Panc1 (cell line): ENCODE measurements at regions of chr5 and their contacts with region 1.

Region 1: DNA sequence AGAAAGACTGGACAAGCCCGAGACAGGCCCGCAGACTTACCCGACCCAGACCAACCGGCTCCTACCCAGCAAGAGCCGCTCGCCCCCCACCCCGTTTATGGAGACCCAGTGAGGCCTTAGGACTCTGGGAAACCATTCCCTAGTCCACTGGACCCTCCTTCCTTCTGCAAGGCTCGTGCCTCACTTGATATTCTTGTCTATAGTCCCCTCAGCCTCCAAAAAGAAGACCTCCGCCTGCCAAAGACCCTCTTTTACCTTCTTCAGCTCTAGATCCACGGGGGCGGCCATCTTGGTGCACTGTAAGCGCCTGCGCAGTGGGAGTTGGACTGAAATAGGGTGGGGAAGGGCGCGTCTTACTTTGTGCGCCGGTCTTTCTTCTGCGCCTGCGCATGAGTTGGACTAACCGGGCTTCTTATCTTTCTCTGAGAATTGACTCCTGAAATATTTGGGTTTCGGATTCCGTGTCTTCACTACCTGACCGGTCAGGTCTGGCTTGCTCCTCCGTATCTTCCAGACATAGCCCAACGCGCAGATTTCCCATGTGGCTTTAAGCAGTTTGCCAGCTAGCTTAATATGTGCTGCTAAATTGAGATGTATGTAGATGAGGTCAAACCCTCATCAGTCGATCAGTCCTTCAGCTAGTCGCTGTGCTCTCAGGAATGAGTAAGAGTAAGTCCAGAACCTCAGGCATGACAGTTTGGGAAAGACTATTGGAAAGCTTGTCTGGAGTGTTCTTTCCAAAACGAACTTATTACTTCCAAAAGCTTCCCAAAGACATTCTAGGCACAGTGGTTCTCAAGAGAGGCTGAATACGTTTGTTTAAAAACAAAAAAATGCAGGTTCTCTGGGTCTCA is at the start of gene PFDN1:
- DNase-seq: peak; percentile 86
- ATAC-seq: peak; percentile 98
- H3K4me3 ChIP-seq: peak within 1 kb of the TSS; percentile 91 to 98
- H3K27ac ChIP-seq: peak within 1 kb of the TSS; percentile 97
- H3K4me1 ChIP-seq: peaks cover 26% of the 10 kb centered on the region
- H3K27me3 ChIP-seq: no peaks in the 10 kb centered on the region
- CTCF ChIP-seq: no peak
- total RNA-seq, gene PFDN1: 54.4 TPM

Region 2: DNA sequence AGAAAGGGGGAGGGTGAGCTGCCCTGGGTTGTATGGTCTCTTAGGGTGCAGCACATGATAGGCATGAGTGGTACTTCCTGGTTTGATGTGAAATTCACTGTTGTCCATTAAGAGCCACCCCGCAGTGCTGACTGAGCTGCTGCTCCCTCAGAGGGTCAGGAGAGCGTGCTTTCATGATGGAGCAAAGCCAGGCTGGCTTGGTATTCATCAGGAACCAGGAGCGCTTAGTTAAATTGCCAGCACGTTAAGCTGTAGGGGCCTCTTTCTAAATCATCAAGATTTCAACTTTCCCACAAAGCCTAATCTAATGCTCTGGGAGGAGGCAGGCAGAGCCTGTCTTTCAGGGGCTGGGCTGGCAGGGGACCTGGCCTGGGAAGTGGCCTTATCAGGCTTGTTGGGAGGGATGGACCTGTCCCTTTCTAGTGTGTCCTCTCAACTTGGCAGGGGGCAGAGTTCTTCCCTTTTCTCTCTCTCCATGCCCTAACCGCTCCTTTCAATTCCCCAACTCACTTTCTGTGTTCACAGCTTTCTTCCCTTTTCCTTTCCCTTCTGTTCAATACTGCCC is 120.1 kb before region 1 on chr5:
- CTCF ChIA-PET with region 1: interaction called, 10 read pairs
- POLR2A ChIA-PET with region 1: no interaction called
- in situ Hi-C with region 1: no loop called
- intact Hi-C with region 1: no loop called
- DNase-seq: no peak
- ATAC-seq: no peak
- H3K4me3 ChIP-seq: no peak overlapping the region
- H3K27ac ChIP-seq: 0 out of 2 replicates have a peak overlapping the region, but pooled peaks have one; percentile 13
- H3K4me1 ChIP-seq: peaks cover 57% of the 10 kb centered on the region
- H3K27me3 ChIP-seq: no peaks in the 10 kb centered on the region
- CTCF ChIP-seq: no peak

Region 3: GRCh38 chr5:140259500-140259899 is 43.5 kb before region 1 on chr5:
- CTCF ChIA-PET with region 1: interaction called, 14 read pairs
- POLR2A ChIA-PET with region 1: no interaction called
- in situ Hi-C with region 1: no loop called
- intact Hi-C with region 1: no loop called
- DNase-seq: no peak
- ATAC-seq: no peak
- H3K4me3 ChIP-seq: no peak overlapping the region
- H3K27ac ChIP-seq: no peak overlapping the region
- H3K4me1 ChIP-seq: peaks cover 20% of the 10 kb centered on the region
- H3K27me3 ChIP-seq: no peaks in the 10 kb centered on the region
- CTCF ChIP-seq: no peak

Region 4: GRCh38 chr5:140346348-140347101 is 43.5 kb after region 1 on chr5 and contains the start of gene HBEGF:
- CTCF ChIA-PET with region 1: interaction called, 7 read pairs
- POLR2A ChIA-PET with region 1: no interaction called
- in situ Hi-C with region 1: no loop called
- intact Hi-C with region 1: loop called (anchors 2 kb)
- DNase-seq: peak; percentile 46
- ATAC-seq: peak; percentile 93
- H3K4me3 ChIP-seq: peak within 1 kb of the TSS; percentile 63 to 68
- H3K27ac ChIP-seq: peak within 1 kb of the TSS; percentile 63; the same call in 1 of the 2 replicates
- H3K4me1 ChIP-seq: peaks cover 14% of the 10 kb centered on the region
- H3K27me3 ChIP-seq: no peaks in the 10 kb centered on the region
- CTCF ChIP-seq: peak; percentile 59
- total RNA-seq, gene HBEGF: 5.0 TPM